ENCODE measurements at regions of chr10 and their contacts with region 1.

Region 1: GRCh38 chr10:30270247-30270646 is 78.8 kb downstream of the MTPAP start:
- DNase-seq: no peak
- ATAC-seq: no peak
- H3K4me3 ChIP-seq: no peak overlapping the region
- H3K27ac ChIP-seq: no peak overlapping the region
- H3K4me1 ChIP-seq: no peaks in the 10 kb centered on the region
- H3K27me3 ChIP-seq: no peaks in the 10 kb centered on the region
- CTCF ChIP-seq: peak; percentile 33; the same call in 1 of the 2 replicates

Region 2: DNA sequence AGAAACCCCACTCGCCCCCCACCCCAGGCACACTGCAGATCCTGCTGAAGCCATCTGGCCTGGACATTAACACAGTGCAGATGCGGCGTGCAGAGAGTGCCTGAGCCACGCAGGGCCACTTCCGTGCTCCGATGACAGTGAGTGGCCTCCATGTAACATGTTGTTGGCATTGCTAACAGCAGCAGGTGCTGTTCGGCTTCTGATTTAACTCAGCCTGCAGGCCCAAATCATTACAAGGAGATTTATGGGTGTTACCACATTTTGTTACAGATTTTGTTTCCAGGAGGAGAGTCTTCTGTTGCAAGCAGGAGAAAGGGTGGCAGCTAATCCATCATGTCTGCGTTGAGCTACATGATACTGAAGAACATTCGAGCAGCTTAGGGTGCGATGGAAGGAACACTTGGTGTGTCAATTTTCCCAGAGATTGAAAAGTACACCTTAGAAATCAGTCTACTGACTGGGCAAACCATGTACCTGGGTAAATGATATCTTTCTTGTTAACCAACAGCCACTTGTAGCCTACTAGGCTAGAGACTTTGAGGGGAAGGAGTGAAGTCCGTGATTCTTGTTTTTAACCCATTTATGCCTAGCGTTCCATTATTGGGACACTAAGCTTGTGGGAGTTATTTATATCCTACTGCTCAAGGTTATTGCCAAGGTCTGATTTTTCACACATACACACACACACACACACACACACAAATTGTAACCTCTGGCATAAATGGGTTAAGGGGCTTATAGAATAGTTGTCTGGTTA is 300.8 kb before region 1 on chr10:
- CTCF ChIA-PET with region 1: interaction called, 15 read pairs
- POLR2A ChIA-PET with region 1: no interaction called
- in situ Hi-C with region 1: no loop called
- intact Hi-C with region 1: no loop called
- DNase-seq: no peak
- ATAC-seq: no peak
- H3K4me3 ChIP-seq: no peak overlapping the region
- H3K27ac ChIP-seq: no peak overlapping the region
- H3K4me1 ChIP-seq: no peaks in the 10 kb centered on the region
- H3K27me3 ChIP-seq: no peaks in the 10 kb centered on the region
- CTCF ChIP-seq: no peak

Region 3: GRCh38 chr10:30284865-30285594 is 14.8 kb after region 1 on chr10:
- CTCF ChIA-PET with region 1: no interaction called
- POLR2A ChIA-PET with region 1: interaction called, 11 read pairs
- in situ Hi-C with region 1: no loop called
- intact Hi-C with region 1: no loop called
- DNase-seq: no peak
- ATAC-seq: no peak
- H3K4me3 ChIP-seq: no peak overlapping the region
- H3K27ac ChIP-seq: no peak overlapping the region
- H3K4me1 ChIP-seq: no peaks in the 10 kb centered on the region
- H3K27me3 ChIP-seq: no peaks in the 10 kb centered on the region
- CTCF ChIP-seq: no peak

Region 4: DNA sequence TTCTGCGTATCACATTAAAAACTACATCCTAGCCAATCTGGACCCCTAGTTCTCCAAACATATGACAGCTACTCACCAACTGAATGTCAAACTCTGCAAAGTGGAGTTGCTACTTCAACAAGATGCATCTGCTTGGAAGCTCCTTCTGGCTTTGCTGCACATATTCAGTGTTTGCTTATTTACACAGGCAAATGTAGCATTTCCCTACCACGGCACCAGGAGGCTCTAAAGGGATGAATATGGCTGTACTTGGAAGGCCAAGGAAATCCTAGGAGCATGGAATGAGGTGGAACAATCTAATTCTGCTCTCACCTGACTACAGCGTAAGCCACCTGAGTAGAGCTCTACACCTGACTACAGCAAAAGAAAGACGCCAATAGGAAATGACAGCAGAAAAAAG is 39.2 kb after region 1 on chr10:
- CTCF ChIA-PET with region 1: no interaction called
- POLR2A ChIA-PET with region 1: no interaction called
- in situ Hi-C with region 1: no loop called
- intact Hi-C with region 1: no loop called
- DNase-seq: no peak
- ATAC-seq: no peak
- H3K4me3 ChIP-seq: no peak overlapping the region
- H3K27ac ChIP-seq: no peak overlapping the region
- H3K4me1 ChIP-seq: no peaks in the 10 kb centered on the region
- H3K27me3 ChIP-seq: no peaks in the 10 kb centered on the region
- CTCF ChIP-seq: no peak